ENCODE measurements at regions of chr7 and their contacts with region 1.

Region 1: GRCh38 chr7:134140889-134141867 is 14.0 kb downstream of the LRGUK start:
- DNase-seq: peak; percentile 27
- H3K4me3 ChIP-seq: no peak overlapping the region
- H3K27ac ChIP-seq: no peak overlapping the region
- H3K27me3 ChIP-seq: no peaks in the 10 kb centered on the region
- CTCF ChIP-seq: peak; percentile 94

Region 2: DNA sequence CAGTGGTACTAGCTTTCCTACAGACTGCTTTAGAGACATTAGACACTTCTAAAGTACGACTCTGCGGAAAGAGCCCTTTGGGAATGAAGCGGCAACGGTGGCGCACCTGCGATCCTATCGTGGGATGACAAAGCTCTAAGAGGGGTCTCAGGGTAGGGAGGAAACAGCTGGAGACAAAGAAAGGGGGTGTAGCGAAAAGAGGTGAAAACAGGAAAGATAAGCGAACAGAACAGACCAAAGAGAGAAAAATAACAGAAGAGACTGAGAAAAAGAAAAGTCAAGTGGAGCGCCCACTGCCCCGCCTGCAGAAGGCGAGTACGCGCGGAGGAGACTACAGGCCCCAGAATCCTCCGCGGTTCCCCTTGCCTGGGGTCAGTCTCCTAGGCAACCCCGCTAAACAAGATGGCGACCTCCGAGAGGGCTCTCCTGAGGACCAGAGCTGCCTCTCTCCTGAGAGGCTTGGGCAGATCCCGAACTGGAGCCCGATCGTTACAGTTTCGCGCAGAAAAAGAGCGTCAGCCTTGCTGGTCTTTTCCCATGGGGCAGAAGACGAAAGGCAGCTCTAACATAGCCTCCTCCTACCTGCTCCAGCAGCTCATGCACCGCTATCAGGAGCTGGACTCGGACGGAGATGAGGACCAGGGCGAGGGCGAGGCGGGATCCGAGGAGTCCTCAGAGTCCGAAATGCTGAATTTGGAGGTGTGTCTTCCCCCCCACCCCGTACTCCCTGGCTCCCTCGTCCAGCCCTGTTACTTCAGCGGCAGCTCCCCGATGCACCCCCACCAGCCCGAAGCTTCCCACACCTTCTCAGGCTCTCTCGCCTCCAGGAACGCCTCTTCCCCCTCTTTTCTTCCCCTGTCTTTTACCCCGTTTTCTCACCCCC is 14.0 kb before region 1 on chr7 and contains the start of gene LRGUK:
- CTCF ChIA-PET with region 1: interaction called, 33 read pairs
- POLR2A ChIA-PET with region 1: no interaction called
- DNase-seq: peak; percentile 51
- H3K4me3 ChIP-seq: peak within 1 kb of the TSS; percentile 84
- H3K27ac ChIP-seq: no peak within 1 kb of the TSS
- H3K27me3 ChIP-seq: peaks cover 3% of the 10 kb centered on the region
- CTCF ChIP-seq: no peak
- polyA plus RNA-seq, gene LRGUK: 0.07 and 0.09 TPM in 2 replicates

Region 3: DNA sequence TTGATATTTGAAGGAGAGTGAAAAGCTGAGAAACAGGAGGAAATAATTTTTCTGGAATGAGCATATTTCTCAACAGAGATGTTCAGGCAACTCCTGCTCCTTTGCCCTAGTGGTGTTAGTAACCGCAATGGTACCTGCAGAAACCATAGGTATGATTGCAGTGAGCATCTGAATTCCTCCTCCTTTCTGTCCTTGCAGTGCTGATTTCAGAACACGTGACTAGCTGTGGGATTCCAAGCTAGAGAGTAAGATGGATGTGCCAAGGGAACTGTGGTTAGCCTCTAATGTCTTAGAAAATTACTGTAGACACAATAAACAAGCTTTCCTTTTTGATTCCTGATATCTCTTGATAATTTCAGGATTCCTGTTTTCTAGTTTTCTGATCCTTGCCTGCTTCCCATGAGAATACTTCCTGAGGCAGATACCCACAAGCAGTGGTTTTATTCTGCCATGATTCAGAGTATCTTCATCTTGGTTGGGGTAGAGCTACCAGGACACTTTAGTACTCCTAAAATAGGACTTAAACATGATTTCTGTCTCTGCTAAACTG is 13.5 kb after region 1 on chr7:
- CTCF ChIA-PET with region 1: interaction called, 46 read pairs
- POLR2A ChIA-PET with region 1: no interaction called
- DNase-seq: no peak
- H3K4me3 ChIP-seq: no peak overlapping the region
- H3K27ac ChIP-seq: no peak overlapping the region
- H3K27me3 ChIP-seq: no peaks in the 10 kb centered on the region
- CTCF ChIP-seq: no peak

Region 4: GRCh38 chr7:134254311-134254710 is 113.1 kb after region 1 on chr7:
- CTCF ChIA-PET with region 1: interaction called, 12 read pairs
- POLR2A ChIA-PET with region 1: no interaction called
- DNase-seq: no peak
- H3K4me3 ChIP-seq: no peak overlapping the region
- H3K27ac ChIP-seq: no peak overlapping the region
- H3K27me3 ChIP-seq: peaks cover 2% of the 10 kb centered on the region
- CTCF ChIP-seq: no peak; the same call in 1 of the 2 replicates

Region 5: DNA sequence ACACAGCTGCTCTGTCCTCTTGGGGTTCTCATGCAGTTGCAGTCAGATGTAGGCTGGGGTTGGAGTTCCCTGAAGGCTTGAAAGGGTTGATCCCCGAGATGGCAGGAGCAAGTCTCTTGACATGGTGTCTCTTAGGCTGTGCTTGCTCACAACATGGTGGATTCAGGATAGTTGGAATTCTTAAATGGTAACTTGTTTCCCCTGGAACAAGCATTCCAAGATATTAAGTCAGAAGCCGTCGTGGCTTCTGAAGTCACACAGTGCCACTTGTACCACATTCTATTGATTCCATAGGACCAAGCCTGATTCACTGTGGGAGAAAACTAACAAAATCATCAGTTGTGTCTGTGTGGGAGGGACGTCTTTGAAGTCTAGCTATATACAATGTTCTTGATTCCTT is 179.0 kb after region 1 on chr7:
- CTCF ChIA-PET with region 1: interaction called, 10 read pairs
- POLR2A ChIA-PET with region 1: no interaction called
- DNase-seq: no peak
- H3K4me3 ChIP-seq: no peak overlapping the region
- H3K27ac ChIP-seq: no peak overlapping the region
- H3K27me3 ChIP-seq: no peaks in the 10 kb centered on the region
- CTCF ChIP-seq: no peak

Region 6: DNA sequence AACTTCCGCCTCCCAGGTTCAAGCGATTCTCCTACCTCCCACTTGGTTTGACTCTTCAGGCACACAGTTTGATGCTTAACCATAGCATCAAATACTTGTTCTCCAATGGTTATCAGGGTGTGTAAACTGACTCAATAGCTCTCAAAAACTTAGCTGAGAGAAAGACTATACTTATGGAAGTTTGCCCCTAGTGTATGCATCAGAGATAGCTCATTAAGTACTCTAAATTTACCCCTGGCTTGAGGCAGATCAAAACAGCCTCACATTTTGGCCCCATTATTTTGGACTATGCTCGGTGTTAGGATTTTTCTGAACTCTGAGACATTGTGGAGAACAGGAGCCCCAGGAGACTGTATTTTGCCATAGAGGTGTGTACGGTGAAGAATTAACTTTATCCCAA is 216.3 kb after region 1 on chr7:
- CTCF ChIA-PET with region 1: interaction called, 16 read pairs
- POLR2A ChIA-PET with region 1: no interaction called
- DNase-seq: no peak
- H3K4me3 ChIP-seq: no peak overlapping the region
- H3K27ac ChIP-seq: no peak overlapping the region
- H3K27me3 ChIP-seq: peaks cover 10% of the 10 kb centered on the region
- CTCF ChIP-seq: peak; percentile 12; the same call in 1 of the 2 replicates

Region 7: GRCh38 chr7:134420424-134421125 is 279.4 kb after region 1 on chr7:
- CTCF ChIA-PET with region 1: interaction called, 27 read pairs
- POLR2A ChIA-PET with region 1: no interaction called
- DNase-seq: peak; percentile 7
- H3K4me3 ChIP-seq: no peak overlapping the region
- H3K27ac ChIP-seq: no peak overlapping the region
- H3K27me3 ChIP-seq: peaks cover 14% of the 10 kb centered on the region
- CTCF ChIP-seq: peak; percentile 65

Region 8: DNA sequence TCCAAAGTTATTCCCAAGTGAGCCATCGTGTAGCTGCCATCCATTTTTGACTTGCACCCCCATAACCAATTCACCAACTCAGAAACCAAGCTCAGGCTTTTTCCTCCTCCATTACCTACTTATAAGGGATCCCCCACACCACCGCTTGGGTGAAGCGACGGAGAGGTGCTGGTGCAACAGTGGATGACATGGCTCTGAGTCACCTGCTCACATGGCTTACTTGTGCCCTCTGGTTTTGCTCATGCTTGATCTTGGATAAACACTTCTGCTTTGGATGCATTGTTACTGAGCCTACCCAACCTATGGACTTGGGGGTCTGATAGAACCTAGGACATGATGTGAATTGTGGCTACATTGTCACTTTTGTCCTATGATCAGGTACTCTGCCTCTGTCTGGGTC is 329.7 kb after region 1 on chr7:
- CTCF ChIA-PET with region 1: no interaction called
- POLR2A ChIA-PET with region 1: no interaction called
- DNase-seq: no peak
- H3K4me3 ChIP-seq: no peak overlapping the region
- H3K27ac ChIP-seq: no peak overlapping the region
- H3K27me3 ChIP-seq: no peaks in the 10 kb centered on the region
- CTCF ChIP-seq: no peak